ENCODE measurements at regions of chr5 and their contacts with region 1.

Region 1: DNA sequence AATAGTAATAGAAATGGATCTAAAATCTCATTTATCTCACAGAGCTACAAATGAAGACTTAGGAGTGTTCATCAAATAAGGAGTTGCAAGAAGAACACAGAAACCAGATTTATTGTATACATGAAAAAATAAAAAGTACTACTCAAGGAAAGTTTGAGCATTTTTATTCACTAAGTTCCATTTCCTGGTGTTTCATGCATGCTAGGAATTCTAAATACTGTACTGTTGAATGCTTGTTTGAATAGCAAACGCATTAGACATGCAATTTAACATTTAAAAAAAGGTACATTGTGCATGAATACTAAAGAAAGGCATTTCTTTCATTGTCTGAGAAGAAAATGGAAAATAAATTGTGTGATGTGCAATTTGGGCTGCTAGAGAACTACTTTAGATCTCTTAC is 52.1 kb downstream of the C6 start:
- DNase-seq: peak; percentile 77
- ATAC-seq: peak; percentile 89
- H3K4me3 ChIP-seq: no peak overlapping the region
- H3K27ac ChIP-seq: peak overlapping the region; percentile 95
- H3K4me1 ChIP-seq: peaks cover 12% of the 10 kb centered on the region
- H3K27me3 ChIP-seq: no peaks in the 10 kb centered on the region
- CTCF ChIP-seq: no peak
- POLR2A ChIP-seq: no peak
- RAD21 ChIP-seq: no peak

Region 2: GRCh38 chr5:41115281-41115680 is 46.0 kb before region 1 on chr5:
- CTCF ChIA-PET with region 1: no interaction called
- POLR2A ChIA-PET with region 1: no interaction called
- dilution Hi-C with region 1: no loop called
- in situ Hi-C with region 1: no loop called
- intact Hi-C with region 1: loop called (anchors 2 kb)
- DNase-seq: peak; percentile 94
- ATAC-seq: peak; percentile 75
- H3K4me3 ChIP-seq: no peak overlapping the region
- H3K27ac ChIP-seq: peak overlapping the region; percentile 97
- H3K4me1 ChIP-seq: peaks cover 26% of the 10 kb centered on the region
- H3K27me3 ChIP-seq: no peaks in the 10 kb centered on the region
- CTCF ChIP-seq: no peak
- POLR2A ChIP-seq: no peak
- RAD21 ChIP-seq: no peak

Region 3: GRCh38 chr5:41252036-41252435 is 90.8 kb after region 1 on chr5:
- CTCF ChIA-PET with region 1: no interaction called
- POLR2A ChIA-PET with region 1: no interaction called
- dilution Hi-C with region 1: no loop called
- in situ Hi-C with region 1: no loop called
- intact Hi-C with region 1: loop called (anchors 10 kb)
- DNase-seq: peak; percentile 66
- ATAC-seq: peak; percentile 90
- H3K4me3 ChIP-seq: no peak overlapping the region
- H3K27ac ChIP-seq: peak overlapping the region; percentile 87; the same call in 1 of the 2 replicates
- H3K4me1 ChIP-seq: peaks cover 10% of the 10 kb centered on the region; the same call in 1 of the 2 replicates
- H3K27me3 ChIP-seq: no peaks in the 10 kb centered on the region
- CTCF ChIP-seq: no peak
- POLR2A ChIP-seq: no peak
- RAD21 ChIP-seq: no peak

Region 4: GRCh38 chr5:41524174-41524573 is 362.9 kb after region 1 on chr5:
- CTCF ChIA-PET with region 1: no interaction called
- POLR2A ChIA-PET with region 1: no interaction called
- dilution Hi-C with region 1: no loop called
- in situ Hi-C with region 1: no loop called
- intact Hi-C with region 1: loop called (anchors 5 kb)
- DNase-seq: no peak
- ATAC-seq: no peak
- H3K4me3 ChIP-seq: no peak overlapping the region
- H3K27ac ChIP-seq: no peak overlapping the region
- H3K4me1 ChIP-seq: peaks cover 3% of the 10 kb centered on the region; the same call in 1 of the 2 replicates
- H3K27me3 ChIP-seq: no peaks in the 10 kb centered on the region
- CTCF ChIP-seq: no peak
- POLR2A ChIP-seq: no peak
- RAD21 ChIP-seq: peak; percentile 27; the same call in 1 of the 2 replicates

Region 5: DNA sequence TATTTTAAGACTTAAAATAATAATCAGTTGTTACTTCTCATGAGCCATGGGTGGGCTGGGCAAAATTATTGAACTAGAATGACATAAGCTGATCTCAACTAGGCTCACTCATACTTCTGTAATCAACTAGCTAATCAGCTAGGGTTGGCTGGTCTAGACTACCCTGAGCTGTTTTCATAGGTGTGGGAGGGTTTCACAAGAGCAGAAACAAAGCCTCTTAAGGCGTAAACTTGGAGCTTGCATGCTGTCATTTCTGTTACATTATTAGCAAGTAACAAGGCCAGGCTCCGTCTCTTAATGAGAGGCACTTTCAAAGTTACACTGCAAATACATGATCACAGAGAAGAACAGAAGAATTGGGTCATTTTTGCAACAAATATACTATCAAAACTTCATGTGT is 1204.8 kb after region 1 on chr5:
- CTCF ChIA-PET with region 1: no interaction called
- POLR2A ChIA-PET with region 1: no interaction called
- dilution Hi-C with region 1: no loop called
- in situ Hi-C with region 1: no loop called
- intact Hi-C with region 1: loop called (anchors 5 kb)
- DNase-seq: no peak
- ATAC-seq: no peak
- H3K4me3 ChIP-seq: no peak overlapping the region
- H3K27ac ChIP-seq: no peak overlapping the region
- H3K4me1 ChIP-seq: no peaks in the 10 kb centered on the region
- H3K27me3 ChIP-seq: no peaks in the 10 kb centered on the region
- CTCF ChIP-seq: no peak
- POLR2A ChIP-seq: no peak
- RAD21 ChIP-seq: no peak